Activated CD4-positive, alpha-beta T cell treated with anti-CD3 and anti-CD28 coated beads for 36 hours (primary cell): ENCODE measurements at regions of chr7 and their contacts with region 1.

Region 1: GRCh38 chr7:137626469-137627067 is 220.2 kb downstream of the DGKI start:
- DNase-seq: peak; percentile 69
- ATAC-seq: peak; percentile 51
- H3K4me3 Mint-ChIP-seq: no peak overlapping the region
- H3K27ac Mint-ChIP-seq: no peak overlapping the region
- H3K4me1 Mint-ChIP-seq: no peaks in the 10 kb centered on the region
- H3K27me3 Mint-ChIP-seq: peaks cover 2% of the 10 kb centered on the region

Region 2: DNA sequence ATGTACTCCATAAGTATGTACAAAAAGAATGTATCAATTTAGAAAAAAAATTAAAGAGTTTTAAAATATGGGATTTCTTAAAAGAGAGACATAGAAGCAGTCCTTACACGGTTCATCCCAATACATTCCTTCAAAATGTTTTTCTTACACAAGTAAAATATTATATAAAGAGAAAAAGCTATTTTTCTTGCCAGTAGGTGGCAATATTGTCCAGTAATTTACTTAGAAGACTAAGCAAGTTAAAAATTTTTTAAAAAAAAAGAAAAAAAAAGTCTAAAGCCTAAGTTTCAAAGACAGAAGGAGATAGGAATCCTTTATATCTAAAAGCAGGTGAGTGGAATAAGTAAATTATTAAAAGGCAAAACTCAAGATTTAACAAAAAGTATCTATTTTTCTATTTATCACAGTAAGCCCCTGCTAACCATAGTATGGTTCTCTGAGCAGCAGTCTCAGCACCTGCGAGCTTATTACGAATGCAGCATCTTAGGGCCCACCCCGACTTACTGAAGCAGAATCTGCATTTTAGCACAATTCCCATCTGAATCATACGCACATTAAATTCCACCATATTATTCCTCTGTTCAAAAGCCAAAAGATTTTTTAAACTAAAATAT is 20.4 kb before region 1 on chr7:
- CTCF ChIA-PET with region 1: interaction called, 17 read pairs
- POLR2A ChIA-PET with region 1: no interaction called
- intact Hi-C with region 1: loop called in 1 of 2 experiments (anchors 2 kb)
- DNase-seq: no peak
- ATAC-seq: no peak
- H3K4me3 Mint-ChIP-seq: no peak overlapping the region
- H3K27ac Mint-ChIP-seq: no peak overlapping the region
- H3K4me1 Mint-ChIP-seq: no peaks in the 10 kb centered on the region
- H3K27me3 Mint-ChIP-seq: peaks cover 11% of the 10 kb centered on the region

Region 3: DNA sequence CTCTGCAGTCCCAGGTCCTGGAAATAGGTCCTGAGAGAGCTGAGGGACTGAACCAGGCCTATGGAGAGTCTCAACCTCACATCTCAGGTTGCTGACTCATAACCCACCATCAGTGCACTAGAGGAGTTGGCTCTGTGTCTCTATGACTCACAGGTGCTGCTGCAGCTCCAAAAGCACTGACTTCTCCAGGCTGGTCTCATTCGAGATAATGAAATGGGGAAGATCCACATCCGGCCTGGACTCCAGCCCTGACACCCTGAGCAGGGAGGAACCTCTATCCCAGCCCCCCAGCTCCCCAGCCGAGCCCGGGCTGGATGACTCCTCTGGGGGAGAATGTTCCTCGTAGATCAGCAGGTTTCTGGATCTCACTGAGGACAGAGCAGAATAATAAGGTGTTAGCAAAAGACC is 255.7 kb after region 1 on chr7:
- CTCF ChIA-PET with region 1: no interaction called
- POLR2A ChIA-PET with region 1: no interaction called
- intact Hi-C with region 1: no loop called
- DNase-seq: peak; percentile 60
- ATAC-seq: peak; percentile 97
- H3K4me3 Mint-ChIP-seq: no peak overlapping the region
- H3K27ac Mint-ChIP-seq: peak overlapping the region; percentile 24
- H3K4me1 Mint-ChIP-seq: peaks cover 18% of the 10 kb centered on the region
- H3K27me3 Mint-ChIP-seq: no peaks in the 10 kb centered on the region